Prostate gland (tissue), 2 donors: ENCODE measurements at regions of chr10 and their contacts with region 1.

Region 1: GRCh38 chr10:71319042-71319799 is at the start of gene SLC29A3:
- DNase-seq: peak; percentile 82
- H3K4me3 ChIP-seq: peak within 1 kb of the TSS; percentile 64 to 76
- H3K27ac ChIP-seq: peak within 1 kb of the TSS; percentile 78 to 84
- H3K4me1 ChIP-seq: no peaks in the 10 kb centered on the region
- H3K27me3 ChIP-seq: no peaks in the 10 kb centered on the region
- CTCF ChIP-seq: peak; percentile 19 to 81 (median 62)
- POLR2A ChIP-seq: peak; percentile 71
- total RNA-seq, gene SLC29A3: 4.6 to 12.7 TPM

Region 2: DNA sequence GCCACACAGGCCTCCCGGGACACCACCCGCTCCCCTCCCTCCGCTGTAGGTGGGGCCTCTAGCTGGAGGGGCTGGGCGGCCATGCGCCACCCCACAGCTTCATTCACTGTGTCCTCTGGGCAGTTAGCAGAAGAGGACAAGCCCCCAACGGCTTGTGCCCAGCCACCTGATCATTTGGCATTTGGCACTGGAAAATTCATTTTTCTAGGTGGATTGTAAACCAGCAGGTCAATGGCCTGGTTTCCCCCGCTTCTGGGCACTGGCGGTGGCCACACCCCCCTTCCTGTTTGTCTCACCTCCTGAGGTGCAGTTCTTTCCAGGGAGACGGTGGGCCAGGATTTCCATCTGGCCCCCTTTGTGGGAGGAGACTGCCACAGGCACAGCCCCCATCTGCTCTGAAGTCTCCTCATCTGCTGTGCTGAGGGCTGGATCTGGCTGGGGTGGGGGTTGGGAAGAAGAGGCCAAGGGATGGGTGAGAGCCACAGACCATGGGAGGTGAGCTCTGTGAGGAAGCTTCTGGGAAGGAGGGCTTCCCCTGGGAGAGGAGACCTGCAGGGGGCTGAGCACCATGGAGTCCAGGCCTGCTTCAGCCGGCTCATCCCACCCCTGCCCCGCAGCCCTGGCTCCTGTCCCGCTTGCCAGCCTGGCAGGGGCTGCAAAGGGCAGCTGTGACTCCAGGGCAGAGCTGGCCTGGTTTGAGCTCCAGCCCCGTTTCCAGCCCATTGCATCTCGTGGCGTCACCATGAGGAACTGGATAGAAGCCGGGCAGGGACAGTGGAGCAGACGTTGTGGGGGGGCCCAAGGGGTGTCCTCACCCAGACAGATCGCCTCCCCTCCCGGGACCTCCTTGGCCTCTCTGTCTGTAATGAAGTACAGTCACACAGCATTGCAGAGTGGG is 40.3 kb before region 1 on chr10:
- intact Hi-C with region 1: no loop called
- DNase-seq: no peak
- H3K4me3 ChIP-seq: no peak overlapping the region
- H3K27ac ChIP-seq: no peak overlapping the region
- H3K4me1 ChIP-seq: no peaks in the 10 kb centered on the region
- H3K27me3 ChIP-seq: no peaks in the 10 kb centered on the region
- CTCF ChIP-seq: no peak
- POLR2A ChIP-seq: no peak

Region 3: GRCh38 chr10:71378336-71379117 is 59.3 kb after region 1 on chr10:
- intact Hi-C with region 1: loop called (anchors 5 kb)
- DNase-seq: no peak
- H3K4me3 ChIP-seq: no peak overlapping the region
- H3K27ac ChIP-seq: no peak overlapping the region
- H3K4me1 ChIP-seq: no peaks in the 10 kb centered on the region
- H3K27me3 ChIP-seq: no peaks in the 10 kb centered on the region
- CTCF ChIP-seq: no peak
- POLR2A ChIP-seq: no peak

Region 4: DNA sequence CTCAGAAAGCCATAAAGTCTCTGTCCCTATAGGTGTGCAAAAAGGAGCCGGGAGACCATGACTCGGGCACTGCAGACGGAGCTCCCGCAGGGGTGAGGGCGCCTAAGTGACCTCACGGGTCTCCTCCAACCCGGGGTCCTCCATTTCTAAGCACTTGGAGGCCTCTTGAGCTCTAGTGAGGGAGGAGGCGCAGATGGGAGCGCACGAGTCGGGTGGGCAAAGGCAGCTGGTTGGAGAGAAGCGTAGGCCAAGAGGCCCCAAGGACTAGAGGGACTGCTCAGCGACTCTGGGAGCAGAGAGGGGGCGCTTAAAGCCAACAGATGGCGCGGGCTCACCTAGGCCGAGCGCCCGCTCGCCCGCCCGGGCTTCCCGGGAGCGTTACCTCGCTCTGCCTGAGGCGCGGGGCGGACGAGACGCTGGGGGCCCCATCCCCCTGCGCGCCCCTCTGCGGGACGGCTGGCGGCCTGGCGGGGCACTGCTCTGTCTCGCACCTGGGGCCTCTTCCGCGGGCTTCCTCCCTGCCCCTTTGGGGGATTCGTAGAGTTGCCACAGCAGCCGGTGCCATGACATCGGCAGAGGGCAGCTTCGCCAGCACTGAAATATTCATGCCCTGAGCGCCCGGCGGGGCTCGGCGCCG is 77.0 kb after region 1 on chr10:
- intact Hi-C with region 1: loop called (anchors 5 kb)
- DNase-seq: peak; percentile 52
- H3K4me3 ChIP-seq: peak overlapping the region; percentile 43 to 53
- H3K27ac ChIP-seq: peak overlapping the region; percentile 42 to 46
- H3K4me1 ChIP-seq: no peaks in the 10 kb centered on the region
- H3K27me3 ChIP-seq: no peaks in the 10 kb centered on the region
- CTCF ChIP-seq: peak; percentile 25 to 86 (median 69)
- POLR2A ChIP-seq: no peak

Region 5: DNA sequence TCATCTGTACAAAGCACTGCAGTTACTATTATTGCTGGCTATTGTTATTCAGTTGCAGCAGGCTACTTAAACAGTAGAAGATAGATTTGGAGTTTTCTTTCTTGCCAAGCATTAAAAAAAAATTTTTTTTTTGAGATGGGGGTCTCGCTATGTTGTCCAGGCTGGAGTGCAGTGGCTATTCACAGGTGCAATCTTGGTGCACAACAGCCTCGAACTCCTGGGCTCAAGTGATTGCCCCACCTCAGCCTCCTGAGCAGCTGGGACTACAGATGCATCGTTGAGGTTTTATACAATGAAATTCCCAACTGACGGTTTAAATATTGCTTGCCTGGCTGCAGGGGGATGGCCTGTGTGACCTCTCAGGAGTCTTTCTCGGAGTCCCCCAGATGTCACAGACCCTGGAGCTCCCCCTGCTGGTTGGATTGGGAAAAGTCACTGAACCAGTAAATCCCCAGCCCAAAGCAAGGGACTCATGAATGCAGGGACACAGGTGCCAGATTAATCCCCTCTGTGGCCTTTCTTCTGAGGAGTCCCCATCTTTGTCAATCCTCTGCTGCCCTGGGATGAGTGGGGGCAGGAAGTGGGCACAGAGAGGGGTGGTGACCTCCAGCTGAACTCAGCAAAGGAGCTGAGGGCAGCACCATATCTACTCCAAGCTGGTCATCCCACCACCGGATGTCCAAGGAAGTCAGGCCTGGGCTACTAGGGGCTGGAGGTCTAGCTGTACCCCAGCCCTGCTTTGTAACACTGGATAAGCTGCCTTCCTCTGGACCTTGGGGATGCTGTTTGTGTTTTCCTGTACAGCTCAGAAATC is 250.8 kb after region 1 on chr10:
- intact Hi-C with region 1: loop called (anchors 10 kb)
- DNase-seq: peak; percentile 71
- H3K4me3 ChIP-seq: no peak overlapping the region
- H3K27ac ChIP-seq: no peak overlapping the region
- H3K4me1 ChIP-seq: no peaks in the 10 kb centered on the region
- H3K27me3 ChIP-seq: no peaks in the 10 kb centered on the region
- CTCF ChIP-seq: peak; percentile 77 to 92 (median 88)
- POLR2A ChIP-seq: no peak

Region 6: GRCh38 chr10:71613261-71613777 is 294.1 kb after region 1 on chr10:
- intact Hi-C with region 1: loop called (anchors 10 kb)
- DNase-seq: no peak
- H3K4me3 ChIP-seq: no peak overlapping the region
- H3K27ac ChIP-seq: no peak overlapping the region
- H3K4me1 ChIP-seq: no peaks in the 10 kb centered on the region
- H3K27me3 ChIP-seq: no peaks in the 10 kb centered on the region
- CTCF ChIP-seq: no peak
- POLR2A ChIP-seq: no peak

Region 7: GRCh38 chr10:71708301-71708703 is 389.1 kb after region 1 on chr10:
- intact Hi-C with region 1: loop called (anchors 5 kb)
- DNase-seq: peak; percentile 21
- H3K4me3 ChIP-seq: no peak overlapping the region
- H3K27ac ChIP-seq: no peak overlapping the region
- H3K4me1 ChIP-seq: no peaks in the 10 kb centered on the region
- H3K27me3 ChIP-seq: no peaks in the 10 kb centered on the region
- CTCF ChIP-seq: peak; percentile 35 to 86 (median 72)
- POLR2A ChIP-seq: no peak

Region 8: GRCh38 chr10:71893920-71894319 is 574.7 kb after region 1 on chr10:
- intact Hi-C with region 1: loop called (anchors 10 kb)
- DNase-seq: no peak
- H3K4me3 ChIP-seq: no peak overlapping the region
- H3K27ac ChIP-seq: no peak overlapping the region
- H3K4me1 ChIP-seq: no peaks in the 10 kb centered on the region
- H3K27me3 ChIP-seq: no peaks in the 10 kb centered on the region
- CTCF ChIP-seq: no peak
- POLR2A ChIP-seq: no peak

Region 9: GRCh38 chr10:72812753-72813430 is 1493.7 kb after region 1 on chr10:
- intact Hi-C with region 1: no loop called
- DNase-seq: no peak
- H3K4me3 ChIP-seq: no peak overlapping the region
- H3K27ac ChIP-seq: no peak overlapping the region
- H3K4me1 ChIP-seq: no peaks in the 10 kb centered on the region
- H3K27me3 ChIP-seq: no peaks in the 10 kb centered on the region
- CTCF ChIP-seq: no peak
- POLR2A ChIP-seq: no peak